Endothelial cell of umbilical vein (primary cell): ENCODE measurements at regions of chr6 and their contacts with region 1.

Region 1: DNA sequence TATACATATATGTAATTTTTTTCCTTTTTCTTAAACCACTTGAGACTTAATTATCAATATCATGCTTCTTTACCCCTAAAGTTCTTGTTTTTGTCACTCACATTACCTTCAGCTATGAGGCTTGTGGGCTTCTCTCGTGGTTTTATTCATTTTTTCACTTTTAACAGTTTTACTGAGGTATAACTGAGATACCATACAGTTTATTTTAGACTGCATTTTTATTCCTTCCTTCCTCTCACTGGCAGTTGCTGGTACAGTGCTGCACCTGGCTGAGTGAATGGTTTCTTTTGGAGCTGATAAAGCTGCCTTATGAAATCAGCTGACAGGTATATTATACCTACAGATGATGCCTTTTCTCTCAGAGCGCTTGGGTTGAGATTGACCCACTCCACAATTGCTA is 54.4 kb downstream of the LRP11 start:
- DNase-seq: no peak
- H3K4me3 ChIP-seq: no peak overlapping the region
- H3K27ac ChIP-seq: no peak overlapping the region
- H3K4me1 ChIP-seq: no peaks in the 10 kb centered on the region
- H3K27me3 ChIP-seq: no peaks in the 10 kb centered on the region
- CTCF ChIP-seq: no peak
- POLR2A ChIP-seq: no peak

Region 2: DNA sequence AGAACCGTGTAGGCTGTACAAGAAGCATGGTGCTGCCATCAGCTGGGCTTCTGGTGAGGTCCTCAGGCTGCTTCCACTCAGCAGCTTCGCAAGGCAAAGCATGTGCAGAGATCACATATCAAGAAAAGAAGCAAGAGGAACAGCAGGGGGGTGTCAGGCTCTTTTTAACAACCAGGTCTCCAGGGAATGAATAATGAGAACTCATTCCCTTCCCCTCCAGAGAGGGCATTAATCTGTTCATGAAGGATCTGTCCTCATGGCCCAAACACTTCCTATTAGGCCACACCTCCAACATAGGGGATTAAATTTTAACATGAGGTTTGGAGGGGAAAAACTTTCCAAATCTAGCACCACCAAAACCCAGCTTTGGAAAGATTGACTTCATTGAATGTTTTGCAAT is 223.6 kb before region 1 on chr6:
- CTCF ChIA-PET with region 1: no interaction called
- POLR2A ChIA-PET with region 1: no interaction called
- dilution Hi-C with region 1: no loop called
- intact Hi-C with region 1: no loop called
- DNase-seq: no peak
- H3K4me3 ChIP-seq: no peak overlapping the region
- H3K27ac ChIP-seq: no peak overlapping the region
- H3K4me1 ChIP-seq: no peaks in the 10 kb centered on the region
- H3K27me3 ChIP-seq: no peaks in the 10 kb centered on the region
- CTCF ChIP-seq: no peak
- POLR2A ChIP-seq: no peak

Region 3: DNA sequence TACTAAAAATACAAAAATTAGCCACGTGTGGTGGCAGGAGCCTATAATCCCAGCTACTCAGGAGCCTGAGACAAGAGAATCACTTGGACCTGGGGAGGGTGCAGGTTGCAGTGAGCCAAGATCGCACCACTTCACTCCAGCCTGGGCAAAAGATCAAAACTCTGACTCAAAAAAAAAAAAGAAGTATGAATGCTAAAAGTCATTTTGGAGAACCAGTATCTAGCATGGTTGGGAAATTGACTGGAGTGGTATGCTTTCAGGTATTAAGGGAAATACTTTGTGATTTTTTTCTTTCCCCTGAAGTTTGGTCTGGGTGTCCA is 30.2 kb before region 1 on chr6:
- CTCF ChIA-PET with region 1: no interaction called
- POLR2A ChIA-PET with region 1: no interaction called
- dilution Hi-C with region 1: no loop called
- intact Hi-C with region 1: no loop called
- DNase-seq: no peak
- H3K4me3 ChIP-seq: no peak overlapping the region
- H3K27ac ChIP-seq: no peak overlapping the region
- H3K4me1 ChIP-seq: no peaks in the 10 kb centered on the region
- H3K27me3 ChIP-seq: no peaks in the 10 kb centered on the region
- CTCF ChIP-seq: no peak
- POLR2A ChIP-seq: no peak

Region 4: DNA sequence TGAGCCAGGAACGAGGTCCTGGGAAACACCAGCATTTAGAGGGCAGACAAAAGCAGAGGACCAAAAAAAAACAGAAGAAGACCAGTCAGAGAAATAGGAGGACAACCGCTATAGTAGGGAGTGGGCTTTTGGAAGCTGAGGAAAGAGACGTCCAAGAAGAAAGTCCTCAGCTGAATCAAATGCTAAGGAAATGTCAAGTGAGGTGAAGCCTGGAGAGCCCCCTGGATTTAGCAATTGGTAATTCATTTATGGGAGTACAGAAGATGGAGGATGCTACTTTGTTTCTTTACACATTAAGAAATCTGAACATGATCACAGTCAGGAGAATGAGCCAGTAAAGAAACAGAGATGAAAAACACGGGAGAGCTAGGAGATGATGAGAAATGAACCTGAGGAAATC is 13.2 kb after region 1 on chr6:
- CTCF ChIA-PET with region 1: interaction called, 12 read pairs
- POLR2A ChIA-PET with region 1: no interaction called
- dilution Hi-C with region 1: no loop called
- intact Hi-C with region 1: no loop called
- DNase-seq: no peak
- H3K4me3 ChIP-seq: no peak overlapping the region
- H3K27ac ChIP-seq: no peak overlapping the region
- H3K4me1 ChIP-seq: no peaks in the 10 kb centered on the region
- H3K27me3 ChIP-seq: no peaks in the 10 kb centered on the region
- CTCF ChIP-seq: no peak
- POLR2A ChIP-seq: no peak

Region 5: DNA sequence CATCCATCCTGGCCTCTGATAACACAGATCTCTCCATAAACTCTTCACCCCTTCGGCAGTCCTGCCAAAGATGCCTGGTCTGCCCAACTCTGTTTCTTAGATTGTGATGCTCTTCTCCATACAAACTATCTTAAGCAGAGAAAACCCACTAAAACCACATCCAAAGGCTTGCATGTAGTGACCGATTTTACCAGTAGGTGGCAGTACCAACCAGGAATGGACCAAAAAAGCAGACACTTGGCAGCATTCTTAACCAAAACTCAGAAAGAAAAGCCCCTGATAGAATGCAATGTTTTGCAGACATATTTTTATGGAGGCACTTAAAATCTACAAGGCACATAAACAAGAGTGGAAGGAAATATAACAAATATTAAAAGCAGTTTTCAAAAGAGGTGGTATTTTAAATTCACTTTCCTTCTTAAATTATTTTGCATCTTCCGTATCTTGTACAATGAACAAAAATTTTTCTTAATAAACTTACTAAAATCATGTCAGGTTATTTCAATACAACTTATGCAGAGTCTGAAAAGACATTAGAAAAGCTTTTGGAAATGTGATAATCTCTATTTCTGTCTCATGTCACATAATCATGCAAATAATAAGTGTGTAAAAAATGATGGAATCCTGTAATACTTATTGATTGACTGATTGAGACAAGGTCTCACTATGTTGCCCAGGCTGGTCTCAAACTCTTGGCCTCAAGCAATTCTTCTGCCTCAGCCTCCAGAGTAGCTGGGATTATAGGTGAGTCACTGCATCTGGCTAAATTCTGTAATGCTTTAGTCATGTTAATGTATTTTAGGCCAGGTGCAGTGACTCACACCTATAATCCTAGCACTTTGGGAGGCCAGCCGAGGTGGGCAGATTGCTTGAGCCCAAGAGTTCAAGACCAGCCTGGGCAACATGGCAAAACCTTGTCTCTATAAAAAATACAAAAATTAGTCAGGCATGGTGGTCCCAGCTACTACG is 25.0 kb after region 1 on chr6:
- CTCF ChIA-PET with region 1: no interaction called
- POLR2A ChIA-PET with region 1: no interaction called
- dilution Hi-C with region 1: no loop called
- intact Hi-C with region 1: no loop called
- DNase-seq: peak; percentile 80
- H3K4me3 ChIP-seq: no peak overlapping the region
- H3K27ac ChIP-seq: no peak overlapping the region
- H3K4me1 ChIP-seq: no peaks in the 10 kb centered on the region
- H3K27me3 ChIP-seq: no peaks in the 10 kb centered on the region
- CTCF ChIP-seq: peak; percentile 77
- POLR2A ChIP-seq: no peak

Region 6: DNA sequence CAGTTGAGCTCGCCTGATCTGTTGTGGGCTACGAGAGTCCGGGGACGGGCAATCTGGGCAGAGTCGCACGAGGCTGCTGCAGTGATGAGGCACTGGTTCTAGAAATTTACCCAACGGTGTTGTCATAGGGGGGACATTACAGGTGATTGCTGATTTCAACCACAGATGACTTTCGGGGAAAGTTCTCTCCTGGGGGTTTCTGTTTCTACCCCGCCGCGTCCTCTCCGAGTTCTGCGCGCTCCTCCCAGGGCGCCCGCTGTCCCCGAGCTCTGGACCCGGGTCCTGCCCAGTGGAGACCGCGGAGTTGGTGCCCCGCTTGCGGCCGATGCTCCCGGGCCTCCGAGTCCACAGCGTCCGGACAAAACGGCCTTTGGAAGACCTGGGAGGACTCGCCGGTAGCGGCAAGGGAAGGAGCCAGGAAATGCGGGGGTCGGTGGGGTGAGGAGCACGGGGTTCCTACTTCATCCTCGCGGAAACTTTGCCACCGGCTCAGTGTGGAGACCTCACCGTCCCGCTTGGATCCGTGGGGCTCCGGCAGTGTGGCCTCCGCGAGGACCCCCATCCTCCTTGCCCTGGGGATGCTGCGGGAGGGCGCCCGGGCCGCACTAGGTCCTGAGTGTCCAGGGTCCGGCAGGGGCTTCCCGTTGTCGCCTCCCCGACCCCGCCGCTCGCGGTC is 227.9 kb after region 1 on chr6:
- CTCF ChIA-PET with region 1: no interaction called
- POLR2A ChIA-PET with region 1: no interaction called
- dilution Hi-C with region 1: no loop called
- intact Hi-C with region 1: no loop called
- DNase-seq: no peak
- H3K4me3 ChIP-seq: no peak overlapping the region
- H3K27ac ChIP-seq: no peak overlapping the region
- H3K4me1 ChIP-seq: no peaks in the 10 kb centered on the region
- H3K27me3 ChIP-seq: peaks cover 62 to 64% of the 10 kb centered on the region in 2 experiments
- CTCF ChIP-seq: no peak
- POLR2A ChIP-seq: no peak